ENCODE measurements at regions of chr10 and their contacts with region 1.

Region 1: GRCh38 chr10:48456361-48456804 is 148.5 kb downstream of the ARHGAP22 start:
- DNase-seq: no peak
- ATAC-seq: peak; percentile 23
- H3K4me3 Mint-ChIP-seq: no peak overlapping the region
- H3K27ac Mint-ChIP-seq: no peak overlapping the region
- H3K4me1 Mint-ChIP-seq: peaks cover 13% of the 10 kb centered on the region; the same call in 1 of the 2 replicates
- H3K27me3 Mint-ChIP-seq: no peaks in the 10 kb centered on the region
- CTCF ChIP-seq: no peak

Region 2: DNA sequence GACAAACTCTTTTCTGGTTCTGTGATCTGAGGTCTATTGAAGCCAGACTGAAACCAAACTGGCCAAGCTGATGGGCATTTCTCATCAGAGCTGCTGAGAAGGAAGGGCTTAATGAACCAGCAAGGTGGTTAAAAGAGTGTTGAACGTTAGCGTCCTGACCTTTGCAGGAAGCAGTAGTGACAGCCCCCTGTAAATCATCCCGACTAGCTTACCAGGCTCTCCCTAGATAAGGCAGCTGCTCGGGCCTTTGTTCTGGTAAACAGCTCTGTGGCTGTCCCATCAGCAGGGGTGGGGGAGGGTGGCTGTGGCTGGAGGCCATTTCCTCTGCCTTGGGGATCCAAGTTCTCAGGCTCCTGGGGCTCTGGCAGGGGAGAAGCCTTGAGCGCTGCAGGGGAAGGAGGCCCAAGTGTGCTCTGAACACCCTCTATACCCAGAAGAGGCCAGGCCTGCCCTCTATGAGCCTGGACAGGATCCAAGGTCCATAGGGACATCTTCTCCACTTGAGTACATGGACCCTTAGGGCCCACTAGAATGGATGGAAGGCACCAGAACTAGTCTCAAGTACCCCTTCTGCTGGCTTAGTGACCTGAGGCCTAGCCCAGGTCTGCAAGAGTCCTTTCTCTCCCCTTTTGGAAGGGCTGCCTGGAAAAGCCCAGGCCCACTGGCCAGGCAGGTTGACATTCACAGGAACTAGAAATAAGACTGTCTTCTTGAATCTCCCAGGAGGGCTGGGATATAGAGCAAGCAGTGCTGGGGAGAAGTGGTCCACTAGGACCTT is 13.9 kb after region 1 on chr10:
- CTCF ChIA-PET with region 1: interaction called, 24 read pairs
- POLR2A ChIA-PET with region 1: interaction called, 3 read pairs
- DNase-seq: no peak
- ATAC-seq: peak; percentile 69
- H3K4me3 Mint-ChIP-seq: no peak overlapping the region
- H3K27ac Mint-ChIP-seq: peak overlapping the region; percentile 23; the same call in 1 of the 2 replicates
- H3K4me1 Mint-ChIP-seq: peaks cover 40% of the 10 kb centered on the region
- H3K27me3 Mint-ChIP-seq: peaks cover 15% of the 10 kb centered on the region
- CTCF ChIP-seq: no peak

Measured in WTC11 (cell line).